ENCODE measurements at regions of chr6 and their contacts with region 1.

Region 1: DNA sequence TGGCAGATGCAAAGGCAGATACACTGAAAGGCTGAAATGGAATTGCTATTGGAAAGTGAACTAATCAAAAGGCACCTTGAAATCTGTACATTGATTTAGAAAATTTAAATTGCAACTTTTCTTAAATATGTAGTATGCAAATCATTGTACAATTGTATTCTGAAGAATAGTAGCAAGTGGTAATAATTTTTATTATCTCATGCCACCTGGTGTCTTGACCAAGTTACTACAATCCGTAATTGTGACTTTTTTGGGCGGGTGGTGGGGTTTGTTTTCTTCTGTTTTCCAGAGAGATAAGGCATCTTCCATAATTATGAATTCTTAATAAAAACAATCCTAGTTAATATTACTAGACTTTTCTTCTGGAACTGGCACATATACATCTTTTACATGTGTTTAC is 12.5 kb upstream of the BCKDHB start:
- DNase-seq: peak; percentile 6
- ATAC-seq: 0 out of 2 replicates have a peak, but pooled peaks have one; percentile 44
- H3K4me3 ChIP-seq: no peak overlapping the region
- H3K27ac ChIP-seq: no peak overlapping the region
- H3K4me1 ChIP-seq: no peaks in the 10 kb centered on the region
- H3K27me3 ChIP-seq: no peaks in the 10 kb centered on the region
- CTCF ChIP-seq: peak; percentile 22 to 71 (median 59); a peak in 5 of 6 replicates
- POLR2A ChIP-seq: no peak
- RAD21 ChIP-seq: peak; percentile 75

Region 2: DNA sequence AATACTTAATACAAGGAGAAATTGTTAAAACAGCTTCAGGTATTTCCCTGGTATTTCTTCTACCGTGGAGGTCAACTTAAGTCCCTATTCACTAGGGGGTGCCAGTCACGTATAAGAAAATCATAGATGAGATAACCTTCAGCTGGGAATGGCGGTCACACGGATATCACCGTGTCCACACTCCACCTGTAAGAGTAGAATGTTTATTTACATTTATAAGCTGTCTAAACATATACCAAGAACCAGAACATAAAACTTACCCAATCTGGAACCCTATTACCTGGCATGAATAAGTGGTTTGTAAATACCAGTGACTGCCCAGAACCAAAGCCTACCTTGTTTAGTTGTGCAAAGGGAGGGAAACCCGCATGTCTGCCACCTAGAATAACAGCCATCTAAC is 144.8 kb before region 1 on chr6:
- CTCF ChIA-PET with region 1: interaction called, 24 read pairs
- POLR2A ChIA-PET with region 1: no interaction called
- RAD21 ChIA-PET with region 1: interaction called, 5 to 6 read pairs
- intact Hi-C with region 1: loop called (anchors 1 kb)
- DNase-seq: peak; percentile 85
- ATAC-seq: peak; percentile 94
- H3K4me3 ChIP-seq: 0 out of 4 replicates have a peak overlapping the region, but pooled peaks of 1 of the 2 experiments have one; percentile 6
- H3K27ac ChIP-seq: no peak overlapping the region
- H3K4me1 ChIP-seq: no peaks in the 10 kb centered on the region
- H3K27me3 ChIP-seq: no peaks in the 10 kb centered on the region
- CTCF ChIP-seq: peak; percentile 63 to 84 (median 65); a peak in 5 of 6 replicates
- POLR2A ChIP-seq: no peak
- RAD21 ChIP-seq: peak; percentile 78

Region 3: GRCh38 chr6:80382811-80383210 is 288.8 kb after region 1 on chr6:
- CTCF ChIA-PET with region 1: no interaction called
- POLR2A ChIA-PET with region 1: no interaction called
- RAD21 ChIA-PET with region 1: no interaction called
- intact Hi-C with region 1: no loop called
- DNase-seq: no peak
- ATAC-seq: no peak
- H3K4me3 ChIP-seq: no peak overlapping the region
- H3K27ac ChIP-seq: no peak overlapping the region
- H3K4me1 ChIP-seq: no peaks in the 10 kb centered on the region
- H3K27me3 ChIP-seq: no peaks in the 10 kb centered on the region
- CTCF ChIP-seq: no peak
- POLR2A ChIP-seq: no peak
- RAD21 ChIP-seq: no peak

Measured in HCT116 (cell line).